Activated naive CD4-positive, alpha-beta T cell treated with anti-CD3 and anti-CD28 coated beads for 36 hours (primary cell): ENCODE measurements at regions of chr11 and their contacts with region 1.

Region 1: DNA sequence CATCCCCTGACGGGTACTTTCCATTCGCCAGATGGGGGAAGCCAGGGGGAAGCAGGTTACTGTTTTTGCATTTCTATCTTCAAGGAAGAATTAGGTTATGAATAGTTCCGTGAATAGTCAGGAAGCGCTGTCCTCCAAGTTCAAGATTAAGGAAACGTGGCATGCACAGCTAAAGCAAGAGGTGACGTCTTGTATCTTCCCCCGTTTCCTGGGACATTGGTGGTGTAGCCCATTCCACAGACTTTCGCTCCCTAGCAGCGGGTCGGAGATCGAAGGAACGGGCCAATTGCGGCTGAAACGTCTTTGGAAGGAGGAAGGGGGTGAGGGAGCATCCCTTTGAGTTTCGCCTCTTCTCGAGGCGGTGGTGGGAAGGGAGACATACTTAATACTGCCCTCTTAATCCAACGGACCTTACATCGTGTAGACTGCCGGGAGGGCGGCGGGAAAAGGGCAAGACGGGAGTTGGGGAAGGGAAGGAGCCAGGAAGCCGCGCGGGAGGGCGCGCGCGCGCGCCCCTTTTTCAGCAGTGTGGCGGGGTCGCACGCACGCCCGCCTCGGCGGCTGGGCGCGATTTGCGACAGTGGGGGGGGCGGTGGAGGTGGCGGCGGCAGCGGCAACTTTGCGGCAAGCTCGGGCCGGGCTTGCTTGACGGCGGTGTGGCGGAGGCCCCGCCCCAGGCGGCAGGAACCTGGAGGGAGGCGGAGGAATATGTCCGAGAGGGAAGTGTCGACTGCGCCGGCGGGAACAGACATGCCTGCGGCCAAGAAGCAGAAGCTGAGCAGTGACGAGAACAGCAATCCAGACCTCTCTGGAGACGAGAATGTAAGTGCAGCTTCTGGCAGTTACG is at the start of gene EED:
- DNase-seq: peak; percentile 94
- H3K4me3 Mint-ChIP-seq: no peak within 1 kb of the TSS
- H3K27ac Mint-ChIP-seq: no peak within 1 kb of the TSS
- H3K4me1 Mint-ChIP-seq: peaks cover 35% of the 10 kb centered on the region
- H3K27me3 Mint-ChIP-seq: no peaks in the 10 kb centered on the region
- total RNA-seq, gene EED: 60.4 to 61.0 TPM

Region 2: DNA sequence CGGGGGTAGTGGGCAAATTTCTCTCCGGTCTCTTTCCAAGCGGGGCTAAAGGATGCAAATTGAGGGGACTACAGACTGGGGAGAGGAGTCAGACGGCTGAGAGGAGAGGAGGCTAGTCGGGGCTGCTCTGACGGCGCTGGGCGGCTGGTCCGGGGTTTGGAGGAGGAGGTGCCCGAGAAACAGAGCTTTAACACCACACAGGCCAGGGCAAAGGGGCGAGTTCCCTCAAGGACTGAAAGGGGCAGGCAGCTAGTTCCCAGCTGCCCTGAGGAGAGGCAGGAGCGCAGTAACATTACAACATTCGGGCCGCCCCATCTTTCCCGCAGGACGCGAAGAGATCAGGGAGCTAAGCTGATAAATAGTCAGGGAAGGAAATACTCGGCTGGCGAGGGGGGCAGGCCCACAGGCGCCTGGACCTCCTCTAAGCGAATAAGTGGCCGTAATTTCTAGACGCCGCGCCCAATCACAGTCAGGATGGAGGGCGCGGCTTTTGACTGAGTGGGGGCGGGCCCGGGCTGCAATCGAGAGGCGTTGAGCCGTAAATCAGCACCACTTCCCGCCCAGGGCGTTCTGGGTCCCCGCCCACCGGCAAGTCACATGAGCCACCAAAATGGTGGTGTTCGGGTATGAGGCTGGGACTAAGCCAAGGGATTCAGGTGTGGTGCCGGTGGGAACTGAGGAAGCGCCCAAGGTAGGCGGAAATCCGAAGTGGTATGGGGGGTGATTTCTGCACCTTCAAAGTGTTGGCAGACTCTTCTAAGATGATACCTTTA is 616.6 kb before region 1 on chr11 and contains the start of gene TMEM126B:
- CTCF ChIA-PET with region 1: no interaction called
- intact Hi-C with region 1: loop called (anchors 1 kb)
- DNase-seq: peak; percentile 98
- H3K4me3 Mint-ChIP-seq: peak within 1 kb of the TSS; percentile 99
- H3K27ac Mint-ChIP-seq: peak within 1 kb of the TSS; percentile 96
- H3K4me1 Mint-ChIP-seq: peaks cover 33% of the 10 kb centered on the region
- H3K27me3 Mint-ChIP-seq: no peaks in the 10 kb centered on the region
- total RNA-seq, gene TMEM126B: 72.6 to 79.0 TPM

Region 3: DNA sequence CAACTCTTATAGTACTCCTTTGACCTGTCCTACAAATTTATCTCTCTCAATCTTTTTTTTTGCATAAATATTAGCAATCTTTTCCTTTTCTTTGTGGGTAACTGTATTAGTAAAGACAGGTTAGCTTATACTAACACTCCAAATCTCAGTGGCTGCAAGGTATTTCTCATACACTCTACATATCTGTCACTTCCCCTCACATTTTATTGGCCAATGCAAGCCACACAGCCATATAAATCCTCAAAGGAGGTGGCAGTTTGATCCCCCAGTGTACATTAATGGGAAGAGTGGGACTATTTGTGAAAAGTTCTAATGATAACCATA is 42.8 kb before region 1 on chr11:
- CTCF ChIA-PET with region 1: no interaction called
- intact Hi-C with region 1: loop called (anchors 1 kb)
- DNase-seq: peak; percentile 42
- H3K4me3 Mint-ChIP-seq: no peak overlapping the region
- H3K27ac Mint-ChIP-seq: no peak overlapping the region
- H3K4me1 Mint-ChIP-seq: no peaks in the 10 kb centered on the region
- H3K27me3 Mint-ChIP-seq: no peaks in the 10 kb centered on the region

Region 4: DNA sequence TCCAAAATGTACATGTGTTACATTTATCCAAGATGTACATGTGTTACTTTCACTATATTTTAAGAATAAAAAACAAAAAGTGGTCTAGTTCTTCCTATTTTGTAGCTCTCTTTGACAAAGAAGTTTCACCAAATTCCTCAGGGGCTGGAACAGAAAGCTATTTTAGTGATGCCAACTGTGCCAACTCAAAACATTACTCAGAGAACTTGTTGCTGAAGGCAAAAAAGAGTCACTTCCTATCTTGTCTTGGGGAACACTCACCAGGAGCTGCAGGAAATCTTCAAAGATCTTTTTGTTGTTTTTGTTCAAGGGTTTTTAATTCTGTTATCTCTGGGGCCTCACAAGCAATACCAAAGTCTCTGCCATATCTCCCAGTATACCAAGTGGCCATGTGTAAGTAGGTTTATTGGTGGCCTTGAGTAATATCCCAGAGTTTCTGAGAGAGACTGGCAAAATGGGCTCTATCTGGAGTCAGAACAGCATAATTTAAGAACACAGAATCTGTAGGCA is 13.8 kb before region 1 on chr11:
- CTCF ChIA-PET with region 1: interaction called, 9 read pairs
- intact Hi-C with region 1: loop called (anchors 1 kb)
- DNase-seq: no peak
- H3K4me3 Mint-ChIP-seq: no peak overlapping the region
- H3K27ac Mint-ChIP-seq: peak overlapping the region; percentile 15
- H3K4me1 Mint-ChIP-seq: peaks cover 62% of the 10 kb centered on the region
- H3K27me3 Mint-ChIP-seq: no peaks in the 10 kb centered on the region

Region 5: DNA sequence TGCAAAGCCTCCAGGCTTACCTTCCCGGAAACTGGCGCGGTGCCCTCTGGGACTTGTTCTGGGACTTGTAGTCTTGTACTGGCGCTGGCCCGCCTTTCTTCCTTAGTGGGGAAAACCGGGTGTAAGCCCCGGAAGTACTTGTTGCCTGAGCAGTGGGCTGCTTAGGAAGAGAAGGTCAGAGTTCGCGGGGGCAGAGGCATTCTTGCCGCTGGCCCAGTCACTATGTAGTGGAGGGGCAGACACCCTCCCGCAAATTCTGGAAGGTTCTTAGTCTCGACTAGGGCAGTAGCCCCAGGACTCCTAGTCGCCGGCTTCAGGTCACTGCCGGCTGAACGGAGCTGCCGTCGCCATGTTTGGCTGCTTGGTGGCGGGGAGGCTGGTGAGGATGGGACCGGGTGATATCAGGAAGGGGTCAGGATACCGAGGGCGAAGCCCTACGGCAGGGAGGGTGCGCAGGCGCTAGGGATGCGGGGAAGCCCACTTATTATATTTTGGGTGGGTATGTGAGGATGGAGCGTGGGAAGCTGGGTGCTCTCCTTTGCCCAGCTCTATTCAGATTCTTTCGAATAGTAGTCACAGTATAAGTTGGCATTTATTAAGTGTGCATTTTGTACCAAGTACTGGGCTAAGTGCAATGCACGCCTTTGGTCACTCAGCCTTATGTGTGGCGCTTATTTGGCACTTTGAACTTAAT is 57.5 kb after region 1 on chr11 and contains the start of gene HIKESHI:
- CTCF ChIA-PET with region 1: interaction called, 3 read pairs
- intact Hi-C with region 1: loop called (anchors 1 kb)
- DNase-seq: peak; percentile 99
- H3K4me3 Mint-ChIP-seq: peak within 1 kb of the TSS; percentile 99
- H3K27ac Mint-ChIP-seq: peak within 1 kb of the TSS; percentile 94
- H3K4me1 Mint-ChIP-seq: peaks cover 26% of the 10 kb centered on the region
- H3K27me3 Mint-ChIP-seq: no peaks in the 10 kb centered on the region
- total RNA-seq, gene HIKESHI: 40.4 to 41.9 TPM